WTC11 (cell line): ENCODE measurements at regions of chr15 and their contacts with region 1.

Region 1: GRCh38 chr15:91032919-91033803 is 10.8 kb upstream of the VPS33B start:
- DNase-seq: peak; percentile 92
- ATAC-seq: peak; percentile 94
- H3K4me3 Mint-ChIP-seq: peak overlapping the region; percentile 36
- H3K27ac Mint-ChIP-seq: peak overlapping the region; percentile 53; the same call in 1 of the 2 replicates
- H3K4me1 Mint-ChIP-seq: peaks cover 6% of the 10 kb centered on the region
- H3K27me3 Mint-ChIP-seq: peaks cover 11% of the 10 kb centered on the region
- CTCF ChIP-seq: peak; percentile 65

Region 2: DNA sequence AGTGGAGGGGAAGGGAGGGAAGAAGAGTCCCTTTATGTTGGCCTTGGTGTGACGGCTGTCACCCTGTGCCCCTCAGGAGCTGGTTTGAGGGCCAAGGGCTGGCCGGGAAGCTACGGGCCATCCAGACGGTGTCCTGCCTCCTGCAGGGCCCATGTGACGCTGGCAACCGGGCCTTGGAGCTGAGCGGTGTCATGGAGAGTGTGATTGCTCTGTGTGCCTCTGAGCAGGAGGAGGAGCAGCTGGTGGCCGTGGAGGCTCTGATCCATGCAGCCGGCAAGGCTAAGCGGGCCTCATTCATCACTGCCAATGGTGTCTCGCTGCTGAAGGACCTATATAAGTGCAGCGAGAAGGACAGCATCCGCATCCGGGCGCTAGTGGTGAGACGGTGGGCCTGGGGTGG is 86.6 kb before region 1 on chr15:
- CTCF ChIA-PET with region 1: interaction called, 10 read pairs
- POLR2A ChIA-PET with region 1: no interaction called
- DNase-seq: no peak
- ATAC-seq: no peak
- H3K4me3 Mint-ChIP-seq: no peak overlapping the region
- H3K27ac Mint-ChIP-seq: no peak overlapping the region
- H3K4me1 Mint-ChIP-seq: no peaks in the 10 kb centered on the region
- H3K27me3 Mint-ChIP-seq: no peaks in the 10 kb centered on the region
- CTCF ChIP-seq: no peak

Region 3: DNA sequence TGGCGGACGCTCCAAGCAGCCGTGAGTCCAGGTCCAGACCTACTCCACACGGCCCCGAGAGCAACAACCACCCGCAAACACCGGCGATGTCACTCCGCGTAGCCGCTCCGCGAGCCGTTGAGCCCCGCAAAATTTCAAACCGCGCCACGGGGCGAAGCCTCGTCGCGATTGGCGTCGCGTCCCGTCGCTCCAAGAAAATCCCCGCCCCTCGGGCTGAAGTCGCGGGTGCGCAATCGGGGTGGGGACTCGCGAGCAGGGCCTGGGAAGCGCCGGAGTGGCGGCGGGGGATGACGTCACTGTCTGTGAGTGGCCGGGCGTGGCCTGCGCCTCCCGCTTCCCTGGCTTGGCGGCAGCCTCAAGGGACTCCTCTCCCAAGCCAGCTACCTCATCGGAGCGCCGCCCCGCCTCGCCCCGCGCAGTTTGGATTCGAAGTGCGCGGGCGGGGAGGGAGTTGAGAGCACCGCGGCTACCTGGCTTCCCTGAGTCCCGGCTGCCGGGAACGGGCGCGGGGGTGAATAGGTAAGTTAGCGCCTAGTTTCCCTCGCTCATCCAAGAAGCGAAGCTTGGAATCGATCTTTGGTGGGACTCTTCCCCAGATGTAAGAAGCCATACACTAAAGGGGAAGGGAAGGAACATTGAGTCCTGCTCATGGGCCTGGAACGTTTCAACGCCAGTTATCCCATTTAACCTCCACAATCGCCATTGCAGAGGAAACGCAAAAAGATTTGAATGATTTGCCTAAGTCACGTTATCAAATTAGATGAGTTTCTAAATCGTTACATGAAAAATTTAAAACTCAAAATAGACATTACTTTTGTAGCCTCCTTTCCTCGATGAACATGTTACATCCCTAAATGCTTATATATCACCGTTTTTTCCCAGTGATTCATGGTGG is 38.5 kb before region 1 on chr15 and contains the start of gene PRC1:
- CTCF ChIA-PET with region 1: interaction called, 28 read pairs
- POLR2A ChIA-PET with region 1: no interaction called
- DNase-seq: peak; percentile 99
- ATAC-seq: peak; percentile 97
- H3K4me3 Mint-ChIP-seq: peak within 1 kb of the TSS; percentile 99
- H3K27ac Mint-ChIP-seq: peak within 1 kb of the TSS; percentile 99
- H3K4me1 Mint-ChIP-seq: peaks cover 23% of the 10 kb centered on the region
- H3K27me3 Mint-ChIP-seq: no peaks in the 10 kb centered on the region
- CTCF ChIP-seq: no peak
- total RNA-seq, gene PRC1: 114 to 130 TPM (median 121 TPM) in 3 replicates

Region 4: GRCh38 chr15:91049378-91050127 is 16.4 kb after region 1 on chr15:
- CTCF ChIA-PET with region 1: interaction called, 26 read pairs
- POLR2A ChIA-PET with region 1: interaction called, 3 read pairs
- DNase-seq: peak; percentile 60
- ATAC-seq: peak; percentile 96
- H3K4me3 Mint-ChIP-seq: no peak overlapping the region
- H3K27ac Mint-ChIP-seq: no peak overlapping the region
- H3K4me1 Mint-ChIP-seq: no peaks in the 10 kb centered on the region
- H3K27me3 Mint-ChIP-seq: no peaks in the 10 kb centered on the region; the same call in 1 of the 2 replicates
- CTCF ChIP-seq: no peak

Region 5: GRCh38 chr15:91246998-91247397 is 213.8 kb after region 1 on chr15:
- CTCF ChIA-PET with region 1: interaction called, 13 read pairs
- POLR2A ChIA-PET with region 1: no interaction called
- DNase-seq: no peak
- ATAC-seq: no peak
- H3K4me3 Mint-ChIP-seq: no peak overlapping the region
- H3K27ac Mint-ChIP-seq: no peak overlapping the region
- H3K4me1 Mint-ChIP-seq: peaks cover 4% of the 10 kb centered on the region; the same call in 1 of the 2 replicates
- H3K27me3 Mint-ChIP-seq: peaks cover 4% of the 10 kb centered on the region; the same call in 1 of the 2 replicates
- CTCF ChIP-seq: no peak